GM10248 (cell line): ENCODE measurements at regions of chr1 and their contacts with region 1.

Region 1: GRCh38 chr1:162035241-162035640 is 11.6 kb upstream of the OLFML2B start:
- DNase-seq: no peak
- CTCF ChIP-seq: no peak

Region 2: GRCh38 chr1:161766102-161766981 is 268.9 kb before region 1 on chr1 and contains the start of gene ATF6:
- CTCF ChIA-PET with region 1: interaction called, 14 read pairs
- POLR2A ChIA-PET with region 1: no interaction called
- DNase-seq: peak; percentile 81
- CTCF ChIP-seq: no peak

Region 3: GRCh38 chr1:161792740-161793139 is 242.5 kb before region 1 on chr1:
- CTCF ChIA-PET with region 1: interaction called, 236 read pairs
- POLR2A ChIA-PET with region 1: interaction called, 3 read pairs
- DNase-seq: peak; percentile 47
- CTCF ChIP-seq: peak; percentile 28

Region 4: GRCh38 chr1:162046921-162047320 is 11.7 kb after region 1 on chr1:
- CTCF ChIA-PET with region 1: interaction called, 53 read pairs
- POLR2A ChIA-PET with region 1: no interaction called
- DNase-seq: no peak
- CTCF ChIP-seq: no peak